ENCODE measurements at regions of chr18 and their contacts with region 1.

Region 1: DNA sequence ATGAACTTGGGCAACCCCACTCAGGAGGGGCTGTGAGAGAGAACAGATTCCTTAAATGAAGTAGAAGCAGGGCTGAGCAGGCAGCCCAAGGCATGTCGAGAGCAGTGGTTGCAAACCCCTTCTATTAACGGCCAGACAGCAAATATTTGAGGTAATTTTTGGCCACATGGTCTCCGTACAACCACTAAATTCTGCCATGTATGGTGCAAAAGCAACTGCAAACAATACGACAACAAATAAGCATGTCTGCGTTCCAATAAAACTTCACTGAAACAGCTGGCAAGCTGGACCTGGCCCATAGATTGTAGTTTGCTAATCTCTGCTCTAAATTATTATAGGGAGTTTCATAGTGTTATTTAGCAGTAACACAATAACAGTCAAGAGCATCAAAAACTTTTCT is 217.0 kb upstream of the ZNF521 start:
- DNase-seq: no peak
- ATAC-seq: no peak
- H3K4me3 Mint-ChIP-seq: no peak overlapping the region
- H3K27ac Mint-ChIP-seq: no peak overlapping the region
- H3K4me1 Mint-ChIP-seq: no peaks in the 10 kb centered on the region
- H3K27me3 Mint-ChIP-seq: no peaks in the 10 kb centered on the region
- CTCF ChIP-seq: no peak

Region 2: DNA sequence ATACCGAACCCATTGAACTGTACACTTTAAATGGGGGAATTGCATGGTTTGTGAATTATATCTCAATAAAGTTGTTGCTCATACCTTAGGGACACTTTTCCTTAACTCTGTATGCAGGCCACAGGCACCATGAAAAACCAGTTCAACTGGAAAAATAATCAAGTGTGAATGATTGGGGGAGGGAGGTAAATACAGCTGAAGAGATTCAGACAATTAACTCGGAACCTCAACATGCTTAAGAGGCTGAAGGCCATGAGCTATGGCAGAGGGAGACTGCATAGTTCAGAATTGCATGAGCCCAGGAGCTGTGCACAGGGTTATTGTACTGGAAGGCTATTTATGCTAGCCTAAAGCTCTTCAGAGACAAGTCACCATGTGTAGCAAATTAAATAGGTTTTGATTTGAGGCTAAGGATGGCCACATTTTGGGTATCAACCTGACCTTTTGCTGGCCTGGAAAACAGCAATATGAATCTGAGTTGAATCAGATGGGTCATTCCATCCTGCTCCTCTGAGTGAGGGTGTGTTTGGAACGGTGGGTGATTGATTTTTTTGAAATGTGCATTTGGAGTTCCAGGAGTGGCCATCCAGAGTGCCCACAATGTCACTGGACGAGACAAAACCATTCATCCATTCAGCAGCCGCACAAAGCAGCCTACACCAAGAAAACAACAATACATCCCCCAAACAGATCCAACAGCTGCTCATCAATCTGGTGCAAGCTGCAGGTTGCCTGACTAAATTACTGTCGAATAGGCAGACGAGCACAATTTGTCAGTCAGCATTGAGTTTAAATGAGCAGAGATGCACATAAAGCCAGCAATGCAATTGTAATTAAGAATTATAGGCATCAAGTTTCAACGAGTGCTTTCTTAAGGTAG is 1066.1 kb before region 1 on chr18:
- CTCF ChIA-PET with region 1: no interaction called
- POLR2A ChIA-PET with region 1: no interaction called
- intact Hi-C with region 1: no loop called
- DNase-seq: no peak
- ATAC-seq: no peak
- H3K4me3 Mint-ChIP-seq: no peak overlapping the region
- H3K27ac Mint-ChIP-seq: no peak overlapping the region
- H3K4me1 Mint-ChIP-seq: no peaks in the 10 kb centered on the region
- H3K27me3 Mint-ChIP-seq: peaks cover 2% of the 10 kb centered on the region
- CTCF ChIP-seq: no peak

Region 3: GRCh38 chr18:25517881-25518715 is 50.9 kb before region 1 on chr18:
- CTCF ChIA-PET with region 1: no interaction called
- POLR2A ChIA-PET with region 1: no interaction called
- intact Hi-C with region 1: loop called (anchors 5 kb)
- DNase-seq: no peak
- ATAC-seq: peak; percentile 39
- H3K4me3 Mint-ChIP-seq: no peak overlapping the region
- H3K27ac Mint-ChIP-seq: peak overlapping the region; percentile 69
- H3K4me1 Mint-ChIP-seq: peaks cover 34% of the 10 kb centered on the region
- H3K27me3 Mint-ChIP-seq: no peaks in the 10 kb centered on the region
- CTCF ChIP-seq: no peak